Heart right ventricle (tissue), 16 donors: ENCODE measurements at regions of chr9 and their contacts with region 1.

Region 1: DNA sequence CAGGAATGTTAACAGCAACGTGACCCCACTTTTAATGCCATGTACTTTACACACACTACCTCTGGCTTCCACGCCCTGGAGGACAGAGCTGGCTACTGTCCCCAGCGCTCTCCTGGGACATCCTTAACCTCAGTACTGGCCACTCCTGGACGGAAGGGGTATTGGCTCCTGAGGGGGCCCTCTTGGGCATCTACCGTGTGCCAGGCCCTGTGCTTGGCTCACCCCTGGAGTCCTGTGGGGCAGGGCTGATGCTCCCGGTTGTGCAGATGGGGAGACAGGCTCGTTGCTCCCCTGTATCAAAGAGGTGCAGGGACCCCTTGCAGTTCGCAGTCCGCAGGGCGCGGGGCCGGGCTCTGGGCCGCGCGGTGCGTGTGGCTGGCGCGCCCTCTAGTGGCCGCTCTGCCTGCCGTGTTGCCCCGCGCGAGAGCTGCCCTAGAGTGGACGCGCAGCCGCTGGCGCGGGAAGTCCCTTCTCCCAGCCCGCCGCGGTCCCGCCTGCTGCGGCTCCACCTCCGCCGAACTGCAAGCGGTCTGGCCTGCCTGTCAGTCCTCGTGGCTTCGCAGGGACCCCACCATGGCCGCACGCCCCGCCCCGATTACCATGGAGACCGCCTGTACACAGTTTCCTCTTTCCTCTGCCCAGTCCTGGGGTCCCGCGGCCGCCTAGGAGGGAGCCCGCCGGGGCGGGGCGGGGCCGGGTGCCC is at the start of gene WDR38:
- DNase-seq: peak; percentile 81 to 83
- ATAC-seq: peak; percentile 89 to 93 (median 90)
- H3K4me3 ChIP-seq: peak within 1 kb of the TSS; percentile 9 to 56 (median 48)
- H3K27ac ChIP-seq: peak within 1 kb of the TSS; percentile 66 to 92 (median 79)
- H3K4me1 ChIP-seq: peaks cover 13 to 42% (median 25%) of the 10 kb centered on the region in 9 donors
- H3K27me3 ChIP-seq: no peaks in the 10 kb centered on the region
- CTCF ChIP-seq: peak; percentile 94 to 100 (median 99)
- total RNA-seq, gene WDR38: 0.22 TPM in 1 of 10 donors, not detected in the others

Region 2: GRCh38 chr9:124800306-124801259 is 52.4 kb before region 1 on chr9:
- intact Hi-C with region 1: no loop called
- DNase-seq: peak; percentile 52 to 76
- ATAC-seq: peak; percentile 34 to 80 (median 64)
- H3K4me3 ChIP-seq: no peak overlapping the region
- H3K27ac ChIP-seq: peak overlapping the region in 7 of 10 donors; percentile 5 to 67 (median 64)
- H3K4me1 ChIP-seq: peaks cover 12 to 65% (median 47%) of the 10 kb centered on the region in 9 donors
- H3K27me3 ChIP-seq: no peaks in the 10 kb centered on the region
- CTCF ChIP-seq: no peak

Region 3: GRCh38 chr9:125143375-125144090 is 290.6 kb after region 1 on chr9 and contains the start of gene SCAI:
- intact Hi-C with region 1: loop called in 1 of 10 experiments (anchors 10 kb)
- DNase-seq: peak; percentile 99
- ATAC-seq: peak; percentile 100
- H3K4me3 ChIP-seq: peak within 1 kb of the TSS; percentile 57 to 78 (median 70)
- H3K27ac ChIP-seq: peak within 1 kb of the TSS in 8 of 10 donors; percentile 58 to 79 (median 67)
- H3K4me1 ChIP-seq: peaks cover 2 to 17% (median 11%) of the 10 kb centered on the region in 9 donors
- H3K27me3 ChIP-seq: no peaks in the 10 kb centered on the region
- CTCF ChIP-seq: peak; percentile 96 to 100 (median 99)
- total RNA-seq, gene SCAI: 2.5 to 4.4 (median 3.6) TPM